ENCODE measurements at regions of chr2 and their contacts with region 1.

Region 1: DNA sequence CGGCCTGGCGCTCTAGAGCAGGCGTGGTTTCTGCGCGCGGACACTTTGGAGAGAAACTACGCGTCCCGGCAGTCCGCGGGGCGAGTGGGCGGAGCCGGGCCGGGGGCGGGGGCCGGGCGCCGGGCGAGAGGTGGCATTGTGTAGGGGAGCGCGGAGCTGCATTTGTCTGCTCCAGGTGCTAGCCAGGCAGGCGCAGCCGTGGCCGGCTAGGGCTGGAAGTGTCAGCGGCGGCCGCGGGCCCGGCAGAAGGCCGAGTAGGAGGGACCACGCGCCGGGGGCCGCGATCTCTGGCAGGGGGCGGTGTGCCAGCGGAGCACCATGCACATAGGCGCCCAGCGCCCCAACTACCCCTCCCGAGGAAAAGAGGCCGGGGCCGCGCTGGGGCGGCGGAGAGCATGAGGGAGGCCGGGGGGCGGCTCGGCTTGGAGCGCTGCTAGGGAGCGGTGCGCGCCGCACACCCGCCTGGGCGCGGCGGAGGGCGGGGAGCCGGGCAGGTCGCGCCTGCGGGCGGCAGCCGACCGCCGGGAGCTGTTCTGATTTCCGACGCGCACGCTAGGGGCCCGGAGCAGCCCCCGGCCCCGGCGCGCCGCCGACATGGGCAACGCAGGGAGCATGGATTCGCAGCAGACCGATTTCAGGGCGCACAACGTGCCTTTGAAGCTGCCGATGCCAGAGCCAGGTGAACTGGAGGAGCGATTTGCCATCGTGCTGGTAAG is at the start of gene FMNL2:
- DNase-seq: peak; percentile 82 to 86
- ATAC-seq: peak; percentile 91 to 96 (median 93)
- H3K4me3 ChIP-seq: peak within 1 kb of the TSS; percentile 70 to 99 (median 96)
- H3K27ac ChIP-seq: peak within 1 kb of the TSS; percentile 62 to 88 (median 77)
- H3K4me1 ChIP-seq: peaks cover 0 to 41% (median 16%) of the 10 kb centered on the region in 9 donors
- H3K27me3 ChIP-seq: peaks cover 0 to 25% (median 0%) of the 10 kb centered on the region in 7 donors
- CTCF ChIP-seq: peak in 3 of 9 donors; percentile 32 to 39 (median 37)
- total RNA-seq, gene FMNL2: 3.3 to 10.4 (median 4.4) TPM

Region 2: GRCh38 chr2:152175458-152176325 is 159.5 kb before region 1 on chr2 and contains the start of gene STAM2:
- intact Hi-C with region 1: loop called in 2 of 10 experiments (anchors 10 kb)
- DNase-seq: peak; percentile 92 to 95
- ATAC-seq: peak; percentile 91 to 98 (median 96)
- H3K4me3 ChIP-seq: peak within 1 kb of the TSS; percentile 56 to 98 (median 76)
- H3K27ac ChIP-seq: peak within 1 kb of the TSS; percentile 92 to 99 (median 96)
- H3K4me1 ChIP-seq: peaks cover 2 to 46% (median 31%) of the 10 kb centered on the region in 9 donors
- H3K27me3 ChIP-seq: no peaks in the 10 kb centered on the region
- CTCF ChIP-seq: peak; percentile 87 to 99 (median 97)
- total RNA-seq, gene STAM2: 22.4 to 35.9 (median 27.2) TPM

Region 3: GRCh38 chr2:152200562-152201465 is 134.4 kb before region 1 on chr2:
- intact Hi-C with region 1: loop called in 3 of 10 experiments (anchors 5 to 10 kb)
- DNase-seq: peak; percentile 69 to 78
- ATAC-seq: peak; percentile 61 to 100 (median 95)
- H3K4me3 ChIP-seq: no peak overlapping the region
- H3K27ac ChIP-seq: no peak overlapping the region
- H3K4me1 ChIP-seq: peaks cover 0 to 7% (median 3%) of the 10 kb centered on the region in 9 donors
- H3K27me3 ChIP-seq: no peaks in the 10 kb centered on the region
- CTCF ChIP-seq: no peak

Region 4: GRCh38 chr2:152421521-152422370 is 86.6 kb after region 1 on chr2:
- intact Hi-C with region 1: loop called in 1 of 10 experiments (anchors 10 kb)
- DNase-seq: peak in 1 of 2 donors; percentile 55
- ATAC-seq: peak; percentile 77 to 97 (median 91)
- H3K4me3 ChIP-seq: no peak overlapping the region
- H3K27ac ChIP-seq: peak overlapping the region in 8 of 10 donors; percentile 13 to 79 (median 44)
- H3K4me1 ChIP-seq: peaks cover 0 to 55% (median 16%) of the 10 kb centered on the region in 9 donors
- H3K27me3 ChIP-seq: no peaks in the 10 kb centered on the region
- CTCF ChIP-seq: no peak

Region 5: DNA sequence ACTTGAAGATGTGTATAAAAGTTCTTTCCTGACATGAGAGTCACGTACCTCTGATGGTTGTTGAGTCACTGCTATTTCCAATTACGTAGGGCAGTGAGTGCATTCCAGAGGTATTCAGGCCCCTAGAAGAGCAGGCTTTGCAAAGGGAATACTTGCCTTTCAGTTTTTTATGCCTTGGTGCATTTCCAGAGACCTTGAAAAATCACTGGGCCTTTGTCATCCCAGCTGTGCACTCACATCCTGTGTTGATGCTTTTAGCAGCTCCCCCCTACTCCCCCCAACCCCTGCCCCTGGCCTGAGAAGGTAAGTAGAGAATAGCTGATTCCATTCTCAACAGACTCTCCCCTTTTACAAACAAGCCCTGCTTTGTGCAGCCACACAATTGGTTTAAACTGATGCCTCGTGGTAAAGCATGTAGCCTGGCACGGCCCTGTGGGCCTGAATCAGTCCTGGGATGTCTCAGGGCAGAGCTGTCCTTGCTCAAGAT is 207.9 kb after region 1 on chr2:
- intact Hi-C with region 1: loop called in 1 of 10 experiments (anchors 10 kb)
- DNase-seq: no peak
- ATAC-seq: peak in 7 of 8 donors; percentile 7 to 71 (median 52)
- H3K4me3 ChIP-seq: no peak overlapping the region
- H3K27ac ChIP-seq: peak overlapping the region in 7 of 10 donors; percentile 13 to 55 (median 33)
- H3K4me1 ChIP-seq: peaks cover 0 to 49% (median 18%) of the 10 kb centered on the region in 9 donors
- H3K27me3 ChIP-seq: no peaks in the 10 kb centered on the region
- CTCF ChIP-seq: no peak

Region 6: GRCh38 chr2:152585830-152586484 is 250.8 kb after region 1 on chr2:
- intact Hi-C with region 1: loop called in 1 of 10 experiments (anchors 10 kb)
- DNase-seq: no peak
- ATAC-seq: peak in 6 of 8 donors; percentile 53 to 91 (median 66)
- H3K4me3 ChIP-seq: no peak overlapping the region
- H3K27ac ChIP-seq: no peak overlapping the region
- H3K4me1 ChIP-seq: peaks cover 0 to 27% (median 6%) of the 10 kb centered on the region in 9 donors
- H3K27me3 ChIP-seq: no peaks in the 10 kb centered on the region
- CTCF ChIP-seq: no peak

Region 7: GRCh38 chr2:152635635-152636298 is 300.6 kb after region 1 on chr2:
- intact Hi-C with region 1: loop called in 2 of 10 experiments (anchors 10 kb)
- DNase-seq: peak in 1 of 2 donors; percentile 50
- ATAC-seq: peak in 7 of 8 donors; percentile 58 to 72 (median 61)
- H3K4me3 ChIP-seq: no peak overlapping the region
- H3K27ac ChIP-seq: no peak overlapping the region
- H3K4me1 ChIP-seq: peaks cover 0 to 4% (median 0%) of the 10 kb centered on the region in 9 donors
- H3K27me3 ChIP-seq: no peaks in the 10 kb centered on the region
- CTCF ChIP-seq: peak; percentile 80 to 90 (median 83)